ENCODE measurements at regions of chr1 and their contacts with region 1.

Region 1: DNA sequence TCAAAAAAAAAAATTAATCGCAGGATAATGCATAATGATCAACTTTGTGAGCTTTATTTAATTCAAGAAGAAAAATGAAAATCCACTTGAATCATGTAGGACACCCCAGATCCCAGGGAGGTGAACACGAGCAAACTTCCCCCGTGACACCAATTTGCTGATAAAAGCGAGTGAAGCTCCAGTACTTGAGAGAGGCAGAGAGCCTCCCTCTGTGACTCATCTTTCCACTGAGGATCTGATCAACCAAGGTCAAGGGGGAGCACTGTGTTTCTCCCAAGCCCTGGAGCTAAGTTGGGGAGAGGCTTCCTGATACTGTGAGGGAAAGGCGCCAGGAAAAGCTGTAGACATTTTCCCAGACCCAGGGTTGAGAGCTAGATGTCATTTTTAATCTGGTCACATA is 160.9 kb downstream of the SLC44A5 start:
- DNase-seq: no peak
- ATAC-seq: no peak
- H3K4me3 ChIP-seq: no peak overlapping the region
- H3K27ac ChIP-seq: no peak overlapping the region
- H3K4me1 ChIP-seq: no peaks in the 10 kb centered on the region
- H3K27me3 ChIP-seq: no peaks in the 10 kb centered on the region
- CTCF ChIP-seq: no peak
- POLR2A ChIP-seq: no peak
- RAD21 ChIP-seq: no peak

Region 2: DNA sequence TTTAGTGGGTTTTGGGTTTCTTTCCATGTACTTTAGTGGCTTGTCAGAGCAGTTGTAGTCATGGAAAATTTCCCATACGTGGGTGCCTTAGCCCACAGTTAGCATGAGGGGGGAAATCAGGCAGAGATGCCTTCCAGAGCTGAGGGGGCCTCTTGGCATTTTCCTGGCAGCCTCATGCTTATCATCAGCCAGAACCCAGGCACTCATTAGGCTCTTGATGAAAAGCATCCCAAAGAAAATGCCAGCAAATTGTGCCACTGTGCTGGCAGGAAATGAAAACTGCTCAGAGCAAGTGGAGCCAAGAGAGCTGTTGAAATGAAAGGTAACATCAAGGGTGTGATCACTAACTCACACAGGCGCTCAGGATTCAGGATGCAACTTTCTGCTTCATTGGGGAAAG is 1086.8 kb before region 1 on chr1:
- CTCF ChIA-PET with region 1: no interaction called
- POLR2A ChIA-PET with region 1: no interaction called
- dilution Hi-C with region 1: no loop called
- in situ Hi-C with region 1: no loop called
- intact Hi-C with region 1: no loop called
- DNase-seq: no peak
- ATAC-seq: no peak
- H3K4me3 ChIP-seq: no peak overlapping the region
- H3K27ac ChIP-seq: no peak overlapping the region
- H3K4me1 ChIP-seq: no peaks in the 10 kb centered on the region
- H3K27me3 ChIP-seq: no peaks in the 10 kb centered on the region
- CTCF ChIP-seq: no peak
- POLR2A ChIP-seq: no peak
- RAD21 ChIP-seq: no peak

Region 3: DNA sequence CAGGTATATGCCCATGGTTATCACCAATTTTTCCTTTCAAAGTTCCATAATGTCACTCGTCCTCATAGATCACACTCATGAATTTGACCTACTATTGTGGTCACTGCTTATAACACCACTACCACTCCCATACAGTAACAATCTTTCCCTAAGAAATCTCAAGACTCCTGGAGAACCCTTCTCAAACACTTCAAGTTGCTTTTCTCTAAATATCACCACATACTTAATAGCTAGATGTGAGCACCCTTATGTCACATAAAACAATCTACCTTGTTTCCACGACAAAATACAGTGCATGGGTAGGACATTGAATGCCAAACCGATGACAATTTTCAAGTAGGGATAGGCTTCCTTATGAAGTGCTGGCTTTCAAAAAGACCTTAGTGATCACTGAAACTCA is 1042.1 kb before region 1 on chr1:
- CTCF ChIA-PET with region 1: no interaction called
- POLR2A ChIA-PET with region 1: no interaction called
- dilution Hi-C with region 1: no loop called
- in situ Hi-C with region 1: no loop called
- intact Hi-C with region 1: loop called (anchors 5 kb)
- DNase-seq: no peak
- ATAC-seq: no peak
- H3K4me3 ChIP-seq: no peak overlapping the region
- H3K27ac ChIP-seq: no peak overlapping the region
- H3K4me1 ChIP-seq: no peaks in the 10 kb centered on the region; the same call in 1 of the 2 replicates
- H3K27me3 ChIP-seq: no peaks in the 10 kb centered on the region
- CTCF ChIP-seq: no peak
- POLR2A ChIP-seq: no peak
- RAD21 ChIP-seq: no peak

Measured in IMR-90 (cell line).